AG04450 (cell line): ENCODE measurements at regions of chr11 and their contacts with region 1.

Region 1: DNA sequence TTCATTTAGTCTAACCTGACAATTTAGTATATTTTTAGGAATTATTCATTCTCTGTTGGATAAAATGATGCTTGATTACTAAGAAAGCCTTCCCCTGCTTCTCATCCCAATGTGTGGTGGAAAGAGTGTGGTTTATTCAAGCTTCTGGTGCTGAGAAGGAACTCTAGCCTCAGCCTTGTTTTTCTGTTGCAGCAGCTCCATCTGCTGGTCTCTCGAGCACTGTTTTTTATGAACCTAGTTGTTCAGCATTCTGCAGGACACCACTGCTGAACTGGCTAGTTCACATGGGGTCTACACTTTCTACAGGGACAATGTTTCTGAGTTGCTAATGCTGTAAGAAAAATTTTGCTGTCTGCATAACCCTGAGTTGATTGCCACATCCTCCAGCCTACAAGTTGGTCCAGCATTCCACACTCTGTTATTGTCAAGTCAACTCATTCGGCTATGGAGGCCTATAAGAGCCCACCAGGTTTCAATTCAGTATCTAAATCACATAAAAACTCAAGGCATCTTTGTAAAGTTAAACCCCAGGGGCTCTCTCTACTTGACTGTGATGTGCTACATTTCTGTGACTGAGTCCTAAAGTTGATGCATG is 14.3 kb downstream of the OR2AG2 start:
- DNase-seq: peak; percentile 15
- H3K4me3 ChIP-seq: no peak overlapping the region
- H3K27ac ChIP-seq: no peak overlapping the region
- H3K27me3 ChIP-seq: no peaks in the 10 kb centered on the region
- CTCF ChIP-seq: peak; percentile 74

Region 2: GRCh38 chr11:6719576-6719975 is 37.9 kb before region 1 on chr11:
- CTCF ChIA-PET with region 1: interaction called, 10 read pairs
- POLR2A ChIA-PET with region 1: no interaction called
- DNase-seq: no peak
- H3K4me3 ChIP-seq: no peak overlapping the region
- H3K27ac ChIP-seq: no peak overlapping the region
- H3K27me3 ChIP-seq: no peaks in the 10 kb centered on the region
- CTCF ChIP-seq: no peak

Region 3: GRCh38 chr11:6737872-6738466 is 19.5 kb before region 1 on chr11:
- CTCF ChIA-PET with region 1: interaction called, 47 read pairs
- POLR2A ChIA-PET with region 1: no interaction called
- DNase-seq: no peak
- H3K4me3 ChIP-seq: no peak overlapping the region
- H3K27ac ChIP-seq: no peak overlapping the region
- H3K27me3 ChIP-seq: peaks cover 3% of the 10 kb centered on the region
- CTCF ChIP-seq: peak; percentile 74

Region 4: GRCh38 chr11:6746086-6746618 is 11.3 kb before region 1 on chr11:
- CTCF ChIA-PET with region 1: interaction called, 54 read pairs
- POLR2A ChIA-PET with region 1: no interaction called
- DNase-seq: no peak
- H3K4me3 ChIP-seq: no peak overlapping the region
- H3K27ac ChIP-seq: no peak overlapping the region
- H3K27me3 ChIP-seq: peaks cover 11% of the 10 kb centered on the region
- CTCF ChIP-seq: no peak